ENCODE measurements at regions of chr5 and their contacts with region 1.

Region 1: GRCh38 chr5:119267958-119268386 is 87.8 kb upstream of the TNFAIP8 start:
- DNase-seq: peak; percentile 97
- H3K4me3 ChIP-seq: peak overlapping the region; percentile 73 to 99 (median 96)
- H3K27ac ChIP-seq: peak overlapping the region; percentile 75
- H3K4me1 ChIP-seq: peaks cover 9% of the 10 kb centered on the region
- H3K27me3 ChIP-seq: peaks cover 2 to 7% of the 10 kb centered on the region in 2 experiments
- CTCF ChIP-seq: peak; percentile 62 to 71
- POLR2A ChIP-seq: no peak

Region 2: GRCh38 chr5:119070828-119071572 is 197.0 kb before region 1 on chr5 and contains the start of gene DMXL1:
- CTCF ChIA-PET with region 1: no interaction called
- POLR2A ChIA-PET with region 1: interaction called, 6 read pairs
- dilution Hi-C with region 1: no loop called
- intact Hi-C with region 1: loop called (anchors 1 kb)
- DNase-seq: peak; percentile 100
- H3K4me3 ChIP-seq: peak within 1 kb of the TSS; percentile 61 to 100 (median 74)
- H3K27ac ChIP-seq: peak within 1 kb of the TSS; percentile 64
- H3K4me1 ChIP-seq: peaks cover 9% of the 10 kb centered on the region
- H3K27me3 ChIP-seq: no peaks in the 10 kb centered on the region
- CTCF ChIP-seq: no peak
- POLR2A ChIP-seq: peak; percentile 6
- total RNA-seq, gene DMXL1: 24.7 and 26.1 TPM in 2 replicates

Region 3: DNA sequence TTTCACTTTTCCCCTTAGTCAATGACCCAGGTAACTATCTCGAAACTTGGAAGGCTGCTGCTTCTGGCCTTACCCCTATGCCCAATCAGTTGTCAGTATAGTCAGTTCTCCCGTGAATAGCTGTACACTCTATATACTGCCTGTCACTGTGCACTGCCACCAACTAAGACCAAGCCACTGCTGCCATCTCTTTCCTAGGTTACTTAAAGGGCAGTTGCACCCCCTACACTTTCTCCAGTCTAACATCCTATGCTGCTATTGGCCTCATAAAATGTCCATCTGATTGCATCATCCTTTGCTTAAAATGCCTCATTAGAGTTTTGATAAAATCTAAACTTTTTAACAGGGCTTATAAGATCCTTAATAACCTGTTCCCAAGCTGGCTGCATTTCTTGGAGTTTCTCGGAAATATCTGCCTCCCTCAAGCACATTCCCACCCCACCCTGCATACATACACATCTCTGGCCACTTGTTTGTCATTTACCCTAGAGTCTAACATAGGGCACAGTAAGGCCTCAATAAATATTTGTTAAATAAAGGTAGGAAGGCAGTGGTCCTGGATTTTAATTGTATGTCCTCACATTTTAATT is 55.1 kb after region 1 on chr5:
- CTCF ChIA-PET with region 1: interaction called, 5 read pairs
- POLR2A ChIA-PET with region 1: interaction called, 4 read pairs
- dilution Hi-C with region 1: no loop called
- intact Hi-C with region 1: loop called (anchors 1 kb)
- DNase-seq: peak; percentile 29
- H3K4me3 ChIP-seq: no peak overlapping the region
- H3K27ac ChIP-seq: peak overlapping the region; percentile 91
- H3K4me1 ChIP-seq: peaks cover 19% of the 10 kb centered on the region
- H3K27me3 ChIP-seq: no peaks in the 10 kb centered on the region
- CTCF ChIP-seq: no peak
- POLR2A ChIP-seq: no peak

Region 4: DNA sequence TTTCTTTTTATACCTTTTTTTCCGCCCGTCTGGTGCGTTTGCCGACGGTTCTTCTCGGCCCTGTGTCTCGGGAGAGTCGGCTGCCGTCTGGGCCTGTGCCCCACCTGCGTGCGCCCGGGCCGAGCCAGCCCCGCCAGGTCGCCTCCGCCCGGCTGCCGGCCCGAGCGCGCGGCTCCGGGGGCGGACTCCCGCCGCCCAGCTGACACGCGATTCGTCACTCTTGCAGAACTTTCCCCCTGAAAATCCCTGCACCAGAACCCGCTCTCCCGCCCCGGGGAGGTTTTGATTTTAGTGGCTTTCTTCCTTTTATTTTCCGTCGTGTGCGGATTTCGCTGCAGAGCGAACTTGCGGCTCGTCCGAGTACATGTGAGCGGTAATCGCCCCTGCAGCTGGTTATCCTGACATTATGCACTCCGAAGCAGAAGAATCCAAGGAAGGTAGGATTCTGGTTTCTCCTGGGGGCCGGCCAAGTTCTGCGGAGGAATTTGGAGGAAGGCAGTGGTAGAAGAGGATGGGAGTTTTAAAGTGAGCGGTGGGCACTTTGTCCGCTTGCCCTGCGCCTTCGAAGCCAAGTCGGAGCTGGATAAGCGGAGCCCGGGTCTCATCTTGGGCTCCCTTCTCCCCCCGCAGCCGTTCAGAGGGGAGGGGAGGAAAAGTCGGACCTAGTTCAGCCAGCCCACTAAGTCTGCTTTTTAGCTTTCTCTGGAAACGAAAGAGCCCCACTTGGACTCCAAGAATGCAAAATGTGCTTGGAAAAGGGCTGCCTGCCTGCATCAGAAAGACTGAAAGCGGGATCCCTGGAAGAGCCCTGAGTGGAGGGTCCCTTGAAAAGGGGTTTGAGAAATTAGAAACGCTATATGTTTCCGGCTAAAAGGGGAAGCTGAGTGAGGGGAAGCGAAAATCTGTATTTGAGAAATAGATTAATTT is 88.0 kb after region 1 on chr5 and contains the start of gene TNFAIP8:
- CTCF ChIA-PET with region 1: no interaction called
- POLR2A ChIA-PET with region 1: no interaction called
- dilution Hi-C with region 1: no loop called
- intact Hi-C with region 1: loop called (anchors 1 kb)
- DNase-seq: peak; percentile 59
- H3K4me3 ChIP-seq: peak within 1 kb of the TSS; percentile 37 to 80 (median 60)
- H3K27ac ChIP-seq: no peak within 1 kb of the TSS
- H3K4me1 ChIP-seq: peaks cover 11% of the 10 kb centered on the region
- H3K27me3 ChIP-seq: peaks cover 0 to 1% of the 10 kb centered on the region in 2 experiments
- CTCF ChIP-seq: no peak
- POLR2A ChIP-seq: no peak
- total RNA-seq, gene TNFAIP8: 6.0 and 7.4 TPM in 2 replicates

Region 5: GRCh38 chr5:119452373-119453039 is 184.5 kb after region 1 on chr5 and contains the start of gene HSD17B4:
- CTCF ChIA-PET with region 1: interaction called, 3 read pairs
- POLR2A ChIA-PET with region 1: no interaction called
- dilution Hi-C with region 1: no loop called
- intact Hi-C with region 1: loop called (anchors 1 kb)
- DNase-seq: peak; percentile 88
- H3K4me3 ChIP-seq: peak within 1 kb of the TSS; percentile 80 to 90 (median 82)
- H3K27ac ChIP-seq: peak within 1 kb of the TSS; percentile 27
- H3K4me1 ChIP-seq: peaks cover 7% of the 10 kb centered on the region
- H3K27me3 ChIP-seq: peaks cover 0 to 1% of the 10 kb centered on the region in 2 experiments
- CTCF ChIP-seq: no peak
- POLR2A ChIP-seq: peak; percentile 39
- total RNA-seq, gene HSD17B4: 124 and 140 TPM in 2 replicates

Measured in endothelial cell of umbilical vein (primary cell).